IMR-90 (cell line): ENCODE measurements at regions of chr5 and their contacts with region 1.

Region 1: DNA sequence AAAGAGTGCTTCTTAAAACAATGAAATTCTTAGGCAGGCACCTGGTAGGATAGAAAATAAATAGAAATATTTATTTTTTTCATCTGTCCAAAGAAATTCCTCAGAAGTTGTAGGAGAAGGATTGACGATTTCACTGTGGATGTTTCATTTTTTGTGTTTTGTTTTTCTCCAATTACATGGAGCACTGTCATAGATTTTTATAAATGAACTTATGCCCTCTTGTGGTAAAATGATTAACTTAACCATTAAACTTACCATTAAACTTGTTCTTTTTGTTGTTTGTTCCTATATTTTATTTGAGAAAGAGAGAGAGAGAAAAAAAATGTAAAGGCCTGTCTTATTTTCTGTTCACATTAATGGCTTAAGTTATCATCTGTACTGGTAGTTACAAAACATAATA is 339.2 kb downstream of the PRR16 start:
- DNase-seq: peak; percentile 54
- ATAC-seq: peak; percentile 59
- H3K4me3 ChIP-seq: no peak overlapping the region
- H3K27ac ChIP-seq: no peak overlapping the region
- H3K4me1 ChIP-seq: peaks cover 4% of the 10 kb centered on the region; the same call in 1 of the 2 replicates
- H3K27me3 ChIP-seq: no peaks in the 10 kb centered on the region
- CTCF ChIP-seq: peak; percentile 43
- POLR2A ChIP-seq: no peak
- RAD21 ChIP-seq: peak; percentile 53

Region 2: DNA sequence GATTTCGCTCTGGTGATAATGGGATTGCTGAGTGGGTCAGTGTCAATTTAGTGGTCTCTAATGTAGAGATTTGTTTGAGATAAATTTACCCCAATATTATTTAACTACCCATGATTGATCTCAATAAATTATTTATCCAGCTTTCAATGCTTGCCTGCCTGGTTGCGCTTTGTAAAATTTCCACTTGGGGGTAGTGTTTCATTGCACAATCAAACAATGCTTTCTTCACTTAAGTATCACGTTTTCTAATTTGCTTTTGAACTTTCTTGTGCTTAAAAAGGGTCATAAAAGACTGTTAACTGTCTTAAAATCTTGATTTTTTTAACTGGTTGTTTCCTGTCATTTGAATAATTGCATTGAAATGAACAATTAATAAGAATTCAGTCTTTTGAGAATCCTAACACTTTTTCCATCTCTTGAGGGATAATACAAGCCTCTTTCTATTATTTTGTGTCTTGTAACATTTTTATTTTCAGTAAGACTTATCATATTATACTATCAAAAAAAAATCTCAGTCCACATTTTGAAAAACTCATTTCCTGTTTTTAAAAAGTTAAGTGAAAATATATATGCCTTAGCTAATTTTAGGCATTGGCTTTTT is 1332.3 kb before region 1 on chr5:
- CTCF ChIA-PET with region 1: no interaction called
- POLR2A ChIA-PET with region 1: no interaction called
- dilution Hi-C with region 1: no loop called
- in situ Hi-C with region 1: no loop called
- intact Hi-C with region 1: loop called (anchors 5 kb)
- DNase-seq: peak; percentile 51
- ATAC-seq: peak; percentile 48; the same call in 1 of the 2 replicates
- H3K4me3 ChIP-seq: no peak overlapping the region
- H3K27ac ChIP-seq: no peak overlapping the region
- H3K4me1 ChIP-seq: no peaks in the 10 kb centered on the region
- H3K27me3 ChIP-seq: no peaks in the 10 kb centered on the region
- CTCF ChIP-seq: peak; percentile 72
- POLR2A ChIP-seq: no peak
- RAD21 ChIP-seq: peak; percentile 82

Region 3: GRCh38 chr5:120055858-120056257 is 747.4 kb before region 1 on chr5:
- CTCF ChIA-PET with region 1: no interaction called
- POLR2A ChIA-PET with region 1: no interaction called
- dilution Hi-C with region 1: no loop called
- in situ Hi-C with region 1: no loop called
- intact Hi-C with region 1: loop called (anchors 1 kb)
- DNase-seq: peak; percentile 76
- ATAC-seq: peak; percentile 97
- H3K4me3 ChIP-seq: no peak overlapping the region
- H3K27ac ChIP-seq: no peak overlapping the region
- H3K4me1 ChIP-seq: no peaks in the 10 kb centered on the region
- H3K27me3 ChIP-seq: no peaks in the 10 kb centered on the region
- CTCF ChIP-seq: peak; percentile 71
- POLR2A ChIP-seq: no peak
- RAD21 ChIP-seq: peak; percentile 72

Region 4: GRCh38 chr5:120463991-120464626 is 339.2 kb before region 1 on chr5 and contains the start of gene PRR16:
- CTCF ChIA-PET with region 1: no interaction called
- POLR2A ChIA-PET with region 1: no interaction called
- dilution Hi-C with region 1: no loop called
- in situ Hi-C with region 1: loop called (anchors 10 kb)
- intact Hi-C with region 1: loop called (anchors 1 kb)
- DNase-seq: peak; percentile 73
- ATAC-seq: peak; percentile 90
- H3K4me3 ChIP-seq: peak within 1 kb of the TSS; percentile 94
- H3K27ac ChIP-seq: peak within 1 kb of the TSS; percentile 95
- H3K4me1 ChIP-seq: no peaks in the 10 kb centered on the region
- H3K27me3 ChIP-seq: no peaks in the 10 kb centered on the region
- CTCF ChIP-seq: peak; percentile 42
- POLR2A ChIP-seq: no peak
- RAD21 ChIP-seq: peak; percentile 51
- total RNA-seq, gene PRR16: 9.9 and 10.6 TPM in 2 replicates

Region 5: DNA sequence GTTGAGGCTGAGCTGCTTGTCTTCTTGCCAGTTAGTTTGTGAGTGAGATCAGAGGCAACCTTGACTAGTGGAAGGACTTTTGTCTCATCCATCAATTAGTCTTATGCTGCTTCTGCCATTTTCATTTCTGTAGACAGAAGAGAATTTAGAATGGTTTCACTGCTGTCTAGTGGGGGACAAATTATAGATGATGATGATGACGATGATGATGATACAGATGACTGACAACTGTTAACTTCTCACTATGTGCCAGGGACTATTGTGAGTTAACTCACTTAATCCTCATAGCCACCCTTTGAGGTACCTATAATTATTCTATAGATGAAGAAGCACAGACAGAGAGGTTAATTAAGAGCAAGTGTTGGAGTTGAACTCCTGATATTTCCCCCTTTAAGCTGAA is 328.4 kb before region 1 on chr5:
- CTCF ChIA-PET with region 1: no interaction called
- POLR2A ChIA-PET with region 1: no interaction called
- dilution Hi-C with region 1: no loop called
- in situ Hi-C with region 1: no loop called
- intact Hi-C with region 1: no loop called
- DNase-seq: no peak
- ATAC-seq: no peak
- H3K4me3 ChIP-seq: no peak overlapping the region
- H3K27ac ChIP-seq: no peak overlapping the region
- H3K4me1 ChIP-seq: peaks cover 5% of the 10 kb centered on the region; the same call in 1 of the 2 replicates
- H3K27me3 ChIP-seq: no peaks in the 10 kb centered on the region
- CTCF ChIP-seq: no peak
- POLR2A ChIP-seq: no peak
- RAD21 ChIP-seq: no peak

Region 6: GRCh38 chr5:120684749-120685415 is 118.4 kb before region 1 on chr5:
- CTCF ChIA-PET with region 1: no interaction called
- POLR2A ChIA-PET with region 1: no interaction called
- dilution Hi-C with region 1: no loop called
- in situ Hi-C with region 1: no loop called
- intact Hi-C with region 1: loop called (anchors 10 kb)
- DNase-seq: peak; percentile 12
- ATAC-seq: peak; percentile 46; the same call in 1 of the 2 replicates
- H3K4me3 ChIP-seq: no peak overlapping the region
- H3K27ac ChIP-seq: no peak overlapping the region
- H3K4me1 ChIP-seq: peaks cover 5% of the 10 kb centered on the region; the same call in 1 of the 2 replicates
- H3K27me3 ChIP-seq: no peaks in the 10 kb centered on the region
- CTCF ChIP-seq: peak; percentile 26; the same call in 1 of the 2 replicates
- POLR2A ChIP-seq: no peak
- RAD21 ChIP-seq: no peak

Region 7: DNA sequence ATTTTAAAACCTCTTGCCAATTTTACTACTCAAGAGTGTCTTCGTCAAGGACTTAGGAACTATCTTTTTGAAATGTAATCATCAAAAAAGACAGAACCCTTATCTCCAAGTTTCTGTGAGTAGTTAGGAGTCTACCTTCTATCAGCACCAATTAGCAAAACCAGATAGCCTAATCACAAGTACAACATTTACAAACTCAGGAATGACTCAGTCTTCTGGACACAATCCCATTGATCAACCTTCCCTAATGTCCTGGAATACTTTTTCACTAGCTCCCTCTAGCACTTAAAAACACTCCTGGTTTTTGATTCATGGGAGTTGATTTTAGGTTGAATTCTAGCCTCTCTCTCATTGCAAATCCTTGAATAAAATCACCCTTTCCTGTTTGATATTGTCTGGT is 341.5 kb after region 1 on chr5:
- CTCF ChIA-PET with region 1: no interaction called
- POLR2A ChIA-PET with region 1: no interaction called
- dilution Hi-C with region 1: no loop called
- in situ Hi-C with region 1: no loop called
- intact Hi-C with region 1: no loop called
- DNase-seq: peak; percentile 35
- ATAC-seq: no peak; the same call in 1 of the 2 replicates
- H3K4me3 ChIP-seq: no peak overlapping the region
- H3K27ac ChIP-seq: no peak overlapping the region
- H3K4me1 ChIP-seq: no peaks in the 10 kb centered on the region
- H3K27me3 ChIP-seq: no peaks in the 10 kb centered on the region
- CTCF ChIP-seq: no peak
- POLR2A ChIP-seq: no peak
- RAD21 ChIP-seq: no peak

Region 8: GRCh38 chr5:121304831-121305230 is 501.5 kb after region 1 on chr5:
- CTCF ChIA-PET with region 1: no interaction called
- POLR2A ChIA-PET with region 1: no interaction called
- dilution Hi-C with region 1: no loop called
- in situ Hi-C with region 1: no loop called
- intact Hi-C with region 1: no loop called
- DNase-seq: no peak
- ATAC-seq: no peak
- H3K4me3 ChIP-seq: no peak overlapping the region
- H3K27ac ChIP-seq: no peak overlapping the region
- H3K4me1 ChIP-seq: no peaks in the 10 kb centered on the region
- H3K27me3 ChIP-seq: no peaks in the 10 kb centered on the region
- CTCF ChIP-seq: no peak
- POLR2A ChIP-seq: no peak
- RAD21 ChIP-seq: no peak